Lower leg skin (tissue), 4 donors: ENCODE measurements at regions of chr17 and their contacts with region 1.

Region 1: GRCh38 chr17:66715745-66716156 is 119.2 kb upstream of the CACNG5 start:
- DNase-seq: peak in 1 of 2 donors; percentile 3
- H3K4me3 ChIP-seq: no peak overlapping the region
- CTCF ChIP-seq: no peak
- POLR2A ChIP-seq: no peak

Region 2: DNA sequence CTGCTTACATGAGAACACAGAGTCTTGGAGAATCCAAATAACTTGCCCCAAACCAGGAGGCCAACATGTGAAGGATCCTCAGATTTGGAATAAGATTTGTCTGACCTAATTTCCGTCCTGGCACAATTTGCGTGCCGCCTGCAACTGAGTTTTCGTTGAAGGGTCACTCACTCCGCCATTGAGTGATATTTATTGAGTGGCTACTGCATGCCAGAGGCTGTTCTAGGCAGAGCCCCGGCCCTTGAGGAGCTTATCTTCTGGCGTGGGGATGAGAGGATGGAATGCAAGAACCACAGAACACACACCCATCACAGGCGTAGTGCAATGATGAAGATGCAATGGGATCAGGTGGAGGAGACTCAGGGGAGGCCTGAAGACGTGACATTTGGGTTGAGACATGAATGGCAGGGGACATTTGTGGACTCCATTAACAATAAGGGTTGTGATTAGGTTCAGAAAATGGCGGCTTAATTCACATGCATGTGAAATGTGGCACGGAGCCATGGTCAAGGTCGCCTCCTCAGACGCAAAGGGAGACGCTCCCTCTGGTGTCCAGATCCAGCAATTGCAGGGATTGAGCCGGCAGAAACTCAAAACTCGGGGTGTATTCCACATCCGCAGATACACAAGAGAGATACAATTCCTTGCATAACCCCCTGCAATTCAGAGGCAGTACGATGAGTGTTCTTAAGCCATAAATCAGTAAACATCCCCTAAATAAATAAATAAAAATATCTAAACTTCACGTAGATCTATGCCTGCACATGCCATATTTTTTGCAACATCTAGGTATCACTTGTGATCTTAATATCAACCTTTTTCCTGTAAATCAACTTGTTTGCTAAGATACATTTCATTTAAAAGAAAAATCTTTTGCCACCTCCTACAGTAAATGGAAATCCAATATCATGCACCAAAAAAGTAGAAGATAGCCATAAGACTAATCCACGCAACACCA is 190.8 kb after region 1 on chr17:
- intact Hi-C with region 1: loop called (anchors 5 kb)
- DNase-seq: peak; percentile 69 to 94
- H3K4me3 ChIP-seq: no peak overlapping the region
- CTCF ChIP-seq: peak in 1 of 3 donors; percentile 59
- POLR2A ChIP-seq: no peak

Region 3: DNA sequence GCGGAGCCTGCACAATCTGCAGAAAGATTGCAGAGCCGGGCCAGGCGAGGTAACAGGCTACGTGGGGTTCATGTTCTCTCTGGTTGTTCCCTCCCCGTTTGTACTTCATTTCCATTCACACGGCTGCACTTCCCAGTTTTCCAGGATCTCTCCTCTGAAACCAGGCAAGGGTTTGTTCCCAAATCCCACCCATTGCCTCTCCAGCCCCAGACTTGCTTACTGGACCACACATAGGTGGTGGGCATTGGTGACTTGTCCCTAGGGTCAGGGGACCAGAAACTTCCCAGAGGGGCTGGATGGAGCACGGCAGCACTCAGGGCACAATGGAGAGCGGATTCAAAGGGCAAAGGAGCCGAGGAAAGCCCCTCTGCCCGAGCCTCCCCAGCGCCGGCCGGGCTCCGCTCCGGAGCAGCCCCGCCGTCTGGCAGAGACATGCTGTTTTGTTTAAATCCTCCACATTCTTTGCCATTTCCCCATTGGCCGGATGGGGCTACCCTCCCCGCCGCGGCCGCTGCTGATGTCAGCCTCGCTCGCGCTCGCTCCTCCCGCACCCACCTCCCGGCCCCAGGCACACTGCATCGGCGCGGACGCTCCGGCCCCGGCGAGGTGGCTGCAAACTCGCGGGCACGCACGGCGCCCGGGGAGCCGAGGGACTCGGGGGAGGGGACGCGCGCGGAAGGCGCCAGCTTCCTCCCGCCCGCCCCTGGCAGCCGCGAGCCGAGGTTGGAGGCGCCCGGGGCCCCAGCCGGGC is 661.2 kb after region 1 on chr17 and contains the start of gene PITPNC1:
- intact Hi-C with region 1: loop called (anchors 10 kb)
- DNase-seq: peak; percentile 70 to 96
- H3K4me3 ChIP-seq: peak within 1 kb of the TSS; percentile 70
- CTCF ChIP-seq: no peak
- POLR2A ChIP-seq: no peak
- total RNA-seq, gene PITPNC1: 1.7 to 8.2 (median 4.6) TPM